GM10248 (cell line): ENCODE measurements at regions of chr12 and their contacts with region 1.

Region 1: DNA sequence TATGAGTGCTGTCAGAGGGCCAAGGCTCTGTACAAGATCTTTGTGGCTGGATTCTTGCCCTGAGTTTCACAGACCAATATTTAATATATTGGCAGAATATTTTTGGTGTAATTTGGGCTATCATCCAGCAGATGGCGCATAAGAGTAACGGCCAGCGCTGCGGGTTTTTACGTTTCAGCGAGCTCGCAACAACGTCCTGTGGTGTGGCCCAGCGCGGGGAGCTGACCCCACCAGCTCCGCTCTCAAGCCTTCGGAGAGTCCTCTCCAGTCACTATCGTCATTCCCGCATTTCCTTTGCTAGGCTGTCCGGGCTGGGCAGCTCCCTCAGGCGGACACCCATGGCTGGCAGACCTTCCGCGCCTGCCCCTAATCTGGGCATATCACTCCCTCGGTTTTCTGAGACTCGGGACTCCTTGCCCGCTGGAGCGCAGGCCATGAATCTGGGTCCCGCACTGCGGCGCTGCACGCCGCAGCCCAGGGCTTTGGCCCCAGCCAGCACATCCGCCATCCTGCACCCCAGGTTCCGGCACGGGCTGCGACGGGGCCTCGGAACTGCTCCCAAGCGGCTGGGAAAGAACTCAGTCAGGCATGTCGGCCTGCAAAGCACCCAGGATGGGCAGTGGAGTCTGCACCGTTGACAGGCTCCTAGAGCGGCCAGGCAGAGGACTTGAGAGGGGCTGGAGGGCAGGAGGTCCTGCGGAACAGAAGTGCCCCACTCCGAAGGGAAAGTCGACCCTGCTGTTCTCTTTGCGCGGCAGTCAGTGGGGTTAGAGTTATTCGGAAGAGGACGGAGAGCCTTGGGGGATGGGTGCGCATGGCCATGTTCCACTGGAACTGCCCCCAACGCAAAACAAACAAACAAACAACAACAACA is 18.4 kb downstream of the OLR1 start:
- DNase-seq: peak; percentile 66
- CTCF ChIP-seq: peak; percentile 67

Region 2: DNA sequence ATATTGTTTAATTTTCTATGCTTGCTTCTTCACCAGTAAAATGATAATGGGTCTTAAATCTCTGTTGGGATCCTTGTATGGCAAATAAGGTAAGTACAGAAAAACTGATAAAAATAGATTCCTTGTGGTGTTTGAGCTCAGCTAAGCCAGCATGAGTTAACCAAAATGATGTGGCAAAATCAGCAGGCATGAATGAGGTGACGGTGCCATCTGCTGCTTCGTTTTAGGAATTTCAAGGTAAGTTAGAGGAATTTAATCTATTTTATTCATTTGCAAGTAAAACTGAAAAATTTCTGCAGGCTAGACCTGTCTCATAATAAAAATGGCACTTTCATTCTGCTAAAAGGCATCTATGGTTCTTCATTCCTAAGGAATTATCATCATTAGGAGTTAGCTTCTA is 13.5 kb before region 1 on chr12:
- CTCF ChIA-PET with region 1: interaction called, 28 read pairs
- POLR2A ChIA-PET with region 1: no interaction called
- DNase-seq: peak; percentile 35
- CTCF ChIP-seq: peak; percentile 38

Region 3: DNA sequence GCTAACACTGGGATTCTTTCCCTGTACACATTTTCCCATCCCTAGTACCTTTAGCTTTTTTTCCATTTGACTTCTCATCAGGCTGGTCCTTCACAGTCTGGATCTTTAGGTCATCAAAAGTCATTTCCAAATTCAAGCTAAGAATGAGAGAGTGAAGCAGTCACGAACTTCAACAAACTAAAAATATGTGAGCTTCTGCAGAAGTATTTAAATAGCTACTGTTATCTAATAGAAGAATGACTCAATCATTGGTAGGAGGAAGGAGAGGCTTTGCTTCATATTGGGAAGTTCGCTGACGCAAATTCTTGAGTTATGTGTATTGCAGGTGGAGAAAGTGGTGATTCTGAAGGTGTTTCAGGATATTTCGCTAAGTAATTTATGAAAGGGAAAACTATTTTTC is 18.4 kb after region 1 on chr12 and contains the start of gene OLR1:
- CTCF ChIA-PET with region 1: interaction called, 17 read pairs
- POLR2A ChIA-PET with region 1: no interaction called
- DNase-seq: no peak
- CTCF ChIP-seq: no peak

Region 4: GRCh38 chr12:10190558-10191388 is 37.3 kb after region 1 on chr12:
- CTCF ChIA-PET with region 1: interaction called, 63 read pairs
- POLR2A ChIA-PET with region 1: no interaction called
- DNase-seq: peak; percentile 74
- CTCF ChIP-seq: peak; percentile 87

Region 5: GRCh38 chr12:10562306-10562933 is 408.9 kb after region 1 on chr12:
- CTCF ChIA-PET with region 1: interaction called, 19 read pairs
- POLR2A ChIA-PET with region 1: no interaction called
- DNase-seq: no peak
- CTCF ChIP-seq: peak; percentile 54